ENCODE measurements at regions of chr12 and their contacts with region 1.

Region 1: DNA sequence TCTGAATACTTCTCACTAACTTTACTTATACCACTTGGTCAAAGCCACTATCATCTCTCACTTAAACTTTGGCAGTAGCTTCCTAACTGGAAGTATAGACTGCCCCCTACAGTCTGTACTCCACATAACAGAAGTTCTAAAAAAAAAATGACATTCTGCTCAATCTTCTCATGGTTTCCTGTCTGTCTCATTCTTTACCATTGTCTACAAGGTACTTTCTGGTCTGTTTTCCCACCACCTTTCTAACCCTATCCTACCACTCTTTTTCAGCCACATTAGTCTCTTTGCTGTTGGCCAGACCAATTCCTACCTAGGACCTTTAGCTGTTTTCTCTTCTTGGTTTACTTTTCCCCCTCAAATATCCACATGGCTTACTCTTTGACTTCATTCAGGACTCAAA is 14.7 kb downstream of the CPSF6 start:
- DNase-seq: peak in 4 of 5 donors; percentile 65 to 68 (median 67)
- H3K4me3 ChIP-seq: no peak overlapping the region
- H3K4me3 Mint-ChIP-seq: no peak overlapping the region
- H3K27ac ChIP-seq: peak overlapping the region; percentile 36
- H3K27ac Mint-ChIP-seq: peak overlapping the region; percentile 57 to 92 (median 86)
- H3K4me1 ChIP-seq: peaks cover 23% of the 10 kb centered on the region
- H3K4me1 Mint-ChIP-seq: peaks cover 22 to 43% (median 34%) of the 10 kb centered on the region in 4 donors
- H3K27me3 ChIP-seq: no peaks in the 10 kb centered on the region
- H3K27me3 Mint-ChIP-seq: no peaks in the 10 kb centered on the region

Region 2: DNA sequence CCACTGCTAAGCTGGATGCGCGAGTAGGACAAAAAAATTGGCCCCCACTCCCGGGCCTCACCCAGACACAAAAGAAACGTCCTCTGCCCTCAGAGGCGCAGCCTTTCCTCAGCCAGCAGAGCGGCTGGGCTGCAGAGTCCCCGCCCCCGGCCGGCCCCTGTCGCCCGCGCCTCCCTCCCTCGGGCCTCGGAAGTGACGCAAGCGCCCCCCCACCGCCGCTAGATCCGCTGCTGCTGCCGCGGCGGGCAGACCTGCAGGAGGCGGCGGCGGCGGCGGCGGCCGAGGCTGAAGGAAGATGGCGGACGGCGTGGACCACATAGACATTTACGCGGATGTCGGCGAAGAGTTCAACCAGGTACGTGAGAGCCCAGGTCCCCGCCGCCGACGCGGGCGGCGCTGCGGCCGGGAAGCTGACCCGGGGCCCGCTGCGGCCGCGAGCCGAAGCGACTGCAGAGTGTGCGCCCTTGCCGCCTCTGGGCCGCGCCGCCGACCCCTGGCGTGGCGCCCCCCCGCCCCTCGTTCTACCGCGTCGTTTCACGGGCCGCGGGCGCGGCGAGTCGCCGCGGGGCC is 14.6 kb before region 1 on chr12 and contains the start of gene CPSF6:
- CTCF ChIA-PET with region 1: interaction called, 33 read pairs
- POLR2A ChIA-PET with region 1: interaction called, 9 read pairs
- intact Hi-C with region 1: loop called (anchors 1 kb)
- DNase-seq: peak; percentile 95 to 96 (median 95)
- H3K4me3 ChIP-seq: peak within 1 kb of the TSS; percentile 60 to 94
- H3K4me3 Mint-ChIP-seq: peak within 1 kb of the TSS; percentile 96 to 100 (median 98)
- H3K27ac ChIP-seq: peak within 1 kb of the TSS; percentile 89
- H3K27ac Mint-ChIP-seq: peak within 1 kb of the TSS; percentile 98 to 100 (median 99)
- H3K4me1 ChIP-seq: peaks cover 52% of the 10 kb centered on the region
- H3K4me1 Mint-ChIP-seq: peaks cover 36 to 57% (median 47%) of the 10 kb centered on the region in 4 donors
- H3K27me3 ChIP-seq: no peaks in the 10 kb centered on the region
- H3K27me3 Mint-ChIP-seq: no peaks in the 10 kb centered on the region
- total RNA-seq, gene CPSF6: 109 to 120 TPM

Region 3: GRCh38 chr12:69405466-69405865 is 151.4 kb after region 1 on chr12:
- CTCF ChIA-PET with region 1: no interaction called
- POLR2A ChIA-PET with region 1: no interaction called
- intact Hi-C with region 1: no loop called
- DNase-seq: no peak
- H3K4me3 ChIP-seq: no peak overlapping the region
- H3K4me3 Mint-ChIP-seq: no peak overlapping the region
- H3K27ac ChIP-seq: no peak overlapping the region
- H3K27ac Mint-ChIP-seq: no peak overlapping the region
- H3K4me1 ChIP-seq: no peaks in the 10 kb centered on the region
- H3K4me1 Mint-ChIP-seq: peaks cover 0 to 2% (median 0%) of the 10 kb centered on the region in 4 donors
- H3K27me3 ChIP-seq: no peaks in the 10 kb centered on the region
- H3K27me3 Mint-ChIP-seq: no peaks in the 10 kb centered on the region